ENCODE measurements at regions of chr11 and their contacts with region 1.

Region 1: GRCh38 chr11:110349138-110349996 is 53.0 kb upstream of the RDX start:
- DNase-seq: peak; percentile 90
- H3K4me3 Mint-ChIP-seq: peak overlapping the region; percentile 5
- H3K27ac Mint-ChIP-seq: peak overlapping the region; percentile 94
- H3K4me1 Mint-ChIP-seq: peaks cover 60% of the 10 kb centered on the region
- H3K27me3 Mint-ChIP-seq: no peaks in the 10 kb centered on the region

Region 2: GRCh38 chr11:110296226-110297075 is 52.9 kb before region 1 on chr11 and contains the start of gene RDX:
- CTCF ChIA-PET with region 1: interaction called, 11 read pairs
- POLR2A ChIA-PET with region 1: interaction called, 12 read pairs
- intact Hi-C with region 1: loop called (anchors 1 kb)
- DNase-seq: peak; percentile 69
- H3K4me3 Mint-ChIP-seq: peak within 1 kb of the TSS; percentile 85
- H3K27ac Mint-ChIP-seq: peak within 1 kb of the TSS; percentile 78
- H3K4me1 Mint-ChIP-seq: peaks cover 41% of the 10 kb centered on the region
- H3K27me3 Mint-ChIP-seq: no peaks in the 10 kb centered on the region
- total RNA-seq, gene RDX: 47.9 to 56.2 TPM

Region 3: GRCh38 chr11:110327508-110327907 is 21.9 kb before region 1 on chr11:
- CTCF ChIA-PET with region 1: interaction called, 5 read pairs
- POLR2A ChIA-PET with region 1: interaction called, 24 read pairs
- intact Hi-C with region 1: loop called (anchors 1 kb)
- DNase-seq: no peak
- H3K4me3 Mint-ChIP-seq: peak overlapping the region; percentile 91
- H3K27ac Mint-ChIP-seq: peak overlapping the region; percentile 84
- H3K4me1 Mint-ChIP-seq: peaks cover 20% of the 10 kb centered on the region
- H3K27me3 Mint-ChIP-seq: no peaks in the 10 kb centered on the region

Region 4: DNA sequence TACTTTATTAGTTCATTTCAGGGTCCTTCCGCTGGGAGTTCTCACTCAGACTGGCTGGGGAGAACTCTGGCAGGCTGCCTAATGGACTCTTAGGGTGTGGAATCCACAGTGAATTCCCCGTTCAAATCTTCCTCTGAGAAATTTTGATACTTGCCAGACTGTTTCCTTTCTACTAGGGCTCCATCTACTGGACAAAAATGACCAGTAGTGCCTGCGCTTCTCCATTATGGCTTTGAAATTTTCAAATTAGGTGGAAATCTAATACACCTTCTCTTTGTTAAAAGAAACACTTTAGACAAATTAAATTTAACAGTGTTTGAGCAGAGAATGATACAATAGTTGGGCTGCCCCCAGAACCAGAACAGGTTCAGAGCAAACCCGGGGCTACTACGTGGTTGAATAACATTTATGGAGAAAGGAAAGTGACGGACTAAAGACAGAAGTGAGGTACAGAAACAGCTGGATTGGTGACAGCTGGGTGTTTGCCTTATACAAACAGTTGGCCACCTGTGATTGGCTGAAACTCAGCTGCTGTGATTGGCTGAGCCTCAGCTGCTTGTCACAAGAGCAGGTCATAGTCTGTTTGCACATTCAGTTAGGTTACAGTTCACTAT is 27.5 kb after region 1 on chr11:
- CTCF ChIA-PET with region 1: interaction called, 13 read pairs
- POLR2A ChIA-PET with region 1: interaction called, 14 read pairs
- intact Hi-C with region 1: loop called (anchors 1 kb)
- DNase-seq: peak; percentile 32
- H3K4me3 Mint-ChIP-seq: no peak overlapping the region
- H3K27ac Mint-ChIP-seq: no peak overlapping the region
- H3K4me1 Mint-ChIP-seq: peaks cover 17% of the 10 kb centered on the region
- H3K27me3 Mint-ChIP-seq: peaks cover 5% of the 10 kb centered on the region

Region 5: DNA sequence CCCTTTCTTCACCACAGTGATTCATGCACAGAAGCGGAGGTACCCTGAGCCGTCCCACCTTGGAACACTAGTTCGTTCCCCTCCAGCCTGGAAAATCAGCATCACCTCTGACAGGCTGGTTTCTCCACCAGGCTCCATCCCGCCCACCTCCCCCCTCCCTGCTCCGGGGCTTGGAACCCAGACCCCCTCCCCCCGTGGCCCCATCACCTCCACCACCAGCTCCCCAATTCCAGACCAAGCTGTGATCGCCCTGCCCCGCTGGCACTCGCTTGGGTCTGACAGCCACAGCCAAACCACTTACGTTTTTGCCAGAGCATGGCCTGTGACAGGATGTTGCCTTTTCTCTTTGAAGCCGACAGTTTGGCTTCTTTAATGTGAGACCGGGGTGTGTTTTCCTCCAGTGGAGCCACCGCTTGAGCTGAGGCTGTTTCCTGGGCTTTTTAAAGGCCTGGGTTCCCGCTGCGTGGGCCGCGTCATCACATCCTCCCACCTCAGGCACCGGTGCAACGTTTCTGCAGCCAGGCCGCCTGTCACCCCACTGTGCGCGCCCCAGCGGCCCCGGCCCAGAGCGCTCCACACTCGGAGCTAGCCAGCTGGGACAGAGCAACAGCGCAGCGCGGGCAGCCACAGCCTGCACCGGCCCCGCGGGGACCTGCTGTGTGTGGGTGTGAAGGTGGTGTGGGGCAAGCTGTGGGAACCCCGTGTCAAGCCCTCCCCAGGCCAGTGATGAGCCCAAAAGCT is 1029.7 kb after region 1 on chr11 and contains the start of gene POU2AF1:
- CTCF ChIA-PET with region 1: no interaction called
- POLR2A ChIA-PET with region 1: no interaction called
- intact Hi-C with region 1: loop called (anchors 5 kb)
- DNase-seq: peak; percentile 88
- H3K4me3 Mint-ChIP-seq: peak within 1 kb of the TSS; percentile 62
- H3K27ac Mint-ChIP-seq: peak within 1 kb of the TSS; percentile 86
- H3K4me1 Mint-ChIP-seq: peaks cover 51% of the 10 kb centered on the region
- H3K27me3 Mint-ChIP-seq: no peaks in the 10 kb centered on the region
- total RNA-seq, gene POU2AF1: 26.9 to 28.3 TPM

Measured in activated CD4-positive, alpha-beta memory T cell treated with anti-CD3 and anti-CD28 coated beads for 36 hours (primary cell).